Activated CD4-positive, alpha-beta T cell treated with anti-CD3 and anti-CD28 coated beads, Interleukin-2, amount 10 ng/mL, durations not matched to agents 24 days and 14 days (primary cell): ENCODE measurements at regions of chr5 and their contacts with region 1.

Region 1: DNA sequence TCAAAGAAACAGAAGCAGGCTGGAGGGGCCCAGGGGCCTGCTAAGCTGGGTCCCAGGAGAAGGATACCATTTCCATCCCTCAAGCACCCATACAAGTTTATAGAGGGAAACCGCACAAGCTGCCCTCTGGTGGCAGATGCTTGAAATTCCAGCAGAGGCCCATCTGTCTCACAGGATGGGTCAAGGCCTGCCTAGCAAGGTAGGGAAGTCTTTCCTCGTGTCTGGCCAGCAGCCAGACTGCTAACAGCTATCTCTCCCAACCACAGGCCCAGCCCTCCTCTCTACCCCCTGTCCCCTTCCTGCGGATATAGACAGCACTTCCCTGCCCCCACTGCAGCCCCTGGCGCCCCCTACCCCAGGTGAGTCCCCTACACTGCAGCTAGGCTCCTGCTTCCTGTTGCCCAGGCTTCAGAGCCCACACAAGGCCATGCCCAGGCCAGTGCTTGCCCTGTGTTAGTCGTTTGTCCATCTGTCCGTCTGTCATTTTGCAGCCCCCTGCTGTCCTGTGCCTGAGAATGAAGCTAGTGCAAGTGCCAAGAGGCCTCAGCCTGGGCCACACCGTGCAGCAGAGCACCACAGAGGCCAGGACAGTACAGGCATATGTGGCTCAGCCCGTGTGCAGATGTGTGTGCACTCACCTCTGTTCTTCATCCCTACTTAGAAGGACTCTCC is 26.2 kb downstream of the TCF7 start:
- DNase-seq: peak; percentile 88
- H3K4me3 Mint-ChIP-seq: no peak overlapping the region
- H3K27ac Mint-ChIP-seq: peak overlapping the region; percentile 46
- H3K4me1 Mint-ChIP-seq: peaks cover 52% of the 10 kb centered on the region
- H3K27me3 Mint-ChIP-seq: peaks cover 3% of the 10 kb centered on the region

Region 2: GRCh38 chr5:134026521-134027268 is 114.0 kb before region 1 on chr5:
- intact Hi-C with region 1: loop called (anchors 1 kb)
- DNase-seq: peak; percentile 84
- H3K4me3 Mint-ChIP-seq: no peak overlapping the region
- H3K27ac Mint-ChIP-seq: no peak overlapping the region
- H3K4me1 Mint-ChIP-seq: peaks cover 2% of the 10 kb centered on the region
- H3K27me3 Mint-ChIP-seq: peaks cover 10% of the 10 kb centered on the region

Region 3: DNA sequence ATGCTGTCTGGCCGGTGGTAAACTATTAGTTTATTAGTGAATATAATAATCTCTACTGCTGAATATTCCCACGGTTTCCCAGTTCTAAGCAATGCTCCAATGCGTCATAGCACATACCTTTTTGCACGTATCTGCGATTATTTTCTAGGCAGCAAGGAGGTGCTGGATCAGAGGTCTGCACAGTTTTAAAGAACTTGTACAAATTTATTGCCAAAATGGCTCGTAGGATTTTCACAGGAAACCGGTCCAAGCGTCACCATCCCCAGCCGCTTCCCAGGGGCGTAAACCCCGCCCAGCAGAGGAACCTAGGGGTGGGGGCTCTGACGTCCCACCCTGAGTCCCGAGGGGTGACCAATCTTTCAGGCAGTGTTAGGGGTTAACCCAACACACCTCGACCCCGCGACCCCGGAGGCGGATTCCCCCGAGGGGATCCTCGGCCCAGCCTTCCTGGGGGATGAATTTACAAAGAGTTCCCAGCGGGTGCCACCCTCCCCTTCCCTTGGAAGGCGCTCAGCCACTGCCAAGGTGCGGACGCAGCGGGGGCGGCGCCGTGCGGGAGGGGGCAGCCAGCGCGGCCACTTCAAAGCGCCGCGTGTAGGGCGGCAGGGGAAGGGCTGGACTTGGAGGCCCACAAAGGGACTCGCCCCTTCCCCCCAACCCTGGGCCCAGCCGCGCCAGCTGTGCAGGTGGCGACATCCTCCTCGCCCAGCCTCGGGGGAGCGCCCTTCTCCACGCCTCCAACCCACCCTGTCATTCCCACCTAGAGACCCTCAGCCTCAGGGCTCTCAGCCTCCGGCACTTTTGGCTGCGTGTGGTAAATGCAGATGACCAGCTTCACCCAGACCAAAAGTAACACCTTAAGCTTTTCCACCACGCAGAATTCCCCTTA is 69.7 kb before region 1 on chr5:
- intact Hi-C with region 1: loop called (anchors 1 kb)
- DNase-seq: peak; percentile 78
- H3K4me3 Mint-ChIP-seq: peak overlapping the region; percentile 83
- H3K27ac Mint-ChIP-seq: peak overlapping the region; percentile 95
- H3K4me1 Mint-ChIP-seq: peaks cover 57% of the 10 kb centered on the region
- H3K27me3 Mint-ChIP-seq: peaks cover 3% of the 10 kb centered on the region

Region 4: GRCh38 chr5:134086943-134087305 is 53.7 kb before region 1 on chr5:
- intact Hi-C with region 1: loop called (anchors 1 kb)
- DNase-seq: peak; percentile 94
- H3K4me3 Mint-ChIP-seq: peak overlapping the region; percentile 65
- H3K27ac Mint-ChIP-seq: peak overlapping the region; percentile 95
- H3K4me1 Mint-ChIP-seq: peaks cover 68% of the 10 kb centered on the region
- H3K27me3 Mint-ChIP-seq: peaks cover 4% of the 10 kb centered on the region

Region 5: DNA sequence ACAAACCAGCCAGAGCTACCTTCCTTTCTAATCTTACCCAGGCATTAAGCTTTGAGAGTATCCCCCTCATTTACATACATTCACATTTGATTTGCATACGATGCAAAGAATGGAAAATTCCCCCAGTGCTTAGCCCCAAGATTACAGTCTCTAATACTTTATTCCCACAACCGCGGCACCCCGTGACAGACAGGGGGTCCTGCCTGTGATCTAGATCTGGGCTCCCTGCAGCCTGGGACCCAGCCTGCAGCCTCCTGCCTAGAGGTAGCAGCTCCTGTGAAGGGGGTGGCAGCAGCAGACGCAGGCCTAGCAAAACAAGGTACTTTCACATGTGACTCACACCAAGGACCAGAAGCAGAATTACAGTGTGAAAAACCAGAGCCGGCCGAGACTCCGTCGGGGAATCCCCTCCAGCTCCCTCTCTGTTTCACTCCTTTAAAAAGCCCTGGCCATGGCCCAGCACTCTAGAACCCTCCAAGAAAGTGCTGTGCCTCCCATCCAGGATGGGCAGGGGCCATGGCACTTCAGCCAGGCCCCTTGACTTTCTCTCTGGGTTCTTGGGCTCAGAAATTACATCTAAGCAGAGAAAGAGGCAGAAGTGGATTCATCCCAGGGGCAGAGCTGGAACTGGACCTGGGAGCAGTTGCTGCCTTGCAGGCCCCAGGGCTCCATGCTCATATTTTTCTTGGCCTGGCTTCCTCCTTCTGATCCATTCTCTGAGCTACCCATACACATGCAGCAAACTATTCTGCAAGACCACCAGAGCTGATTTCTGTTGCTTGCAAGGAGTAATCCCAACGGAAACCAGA is 40.2 kb before region 1 on chr5:
- intact Hi-C with region 1: loop called (anchors 1 kb)
- DNase-seq: peak; percentile 94
- H3K4me3 Mint-ChIP-seq: peak overlapping the region; percentile 59
- H3K27ac Mint-ChIP-seq: peak overlapping the region; percentile 90
- H3K4me1 Mint-ChIP-seq: peaks cover 58% of the 10 kb centered on the region
- H3K27me3 Mint-ChIP-seq: peaks cover 3% of the 10 kb centered on the region

Region 6: GRCh38 chr5:134113902-134114875 is 26.5 kb before region 1 on chr5 and contains the start of gene TCF7:
- intact Hi-C with region 1: loop called (anchors 1 kb)
- DNase-seq: peak; percentile 92
- H3K4me3 Mint-ChIP-seq: peak within 1 kb of the TSS; percentile 87
- H3K27ac Mint-ChIP-seq: peak within 1 kb of the TSS; percentile 89
- H3K4me1 Mint-ChIP-seq: peaks cover 63% of the 10 kb centered on the region
- H3K27me3 Mint-ChIP-seq: peaks cover 12% of the 10 kb centered on the region
- total RNA-seq, gene TCF7: 112 and 113 TPM in 2 replicates

Region 7: GRCh38 chr5:134225618-134226440 is 85.2 kb after region 1 on chr5 and contains the start of gene PPP2CA:
- intact Hi-C with region 1: no loop called
- DNase-seq: peak; percentile 100
- H3K4me3 Mint-ChIP-seq: peak within 1 kb of the TSS; percentile 97
- H3K27ac Mint-ChIP-seq: peak within 1 kb of the TSS; percentile 100
- H3K4me1 Mint-ChIP-seq: peaks cover 42% of the 10 kb centered on the region
- H3K27me3 Mint-ChIP-seq: no peaks in the 10 kb centered on the region
- total RNA-seq, gene PPP2CA: 177 and 199 TPM in 2 replicates